RWPE1 (cell line): ENCODE measurements at regions of chrX and their contacts with region 1.

Region 1: GRCh38 chrX:119606280-119607015 is at the start of gene NKRF:
- DNase-seq: peak; percentile 77
- H3K27ac ChIP-seq: peak within 1 kb of the TSS; percentile 74
- CTCF ChIP-seq: no peak

Region 2: DNA sequence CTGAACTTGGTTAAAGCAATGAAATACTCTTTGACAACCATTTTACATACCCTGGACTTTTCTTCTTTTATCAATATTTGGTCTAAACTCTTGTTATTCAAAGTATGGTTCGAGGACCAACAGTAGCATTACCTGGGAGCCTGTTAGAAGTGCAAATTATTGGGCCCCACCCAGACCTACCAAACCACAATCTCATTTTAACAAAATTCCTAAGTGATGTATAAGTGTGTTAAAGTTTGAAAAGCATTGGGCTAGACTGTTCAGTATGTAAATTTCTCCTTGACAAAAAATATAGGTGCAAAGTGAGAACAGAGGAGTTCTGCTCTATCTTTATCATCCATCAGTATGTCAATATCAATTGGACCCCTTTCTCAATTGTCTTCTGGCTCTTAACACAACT is 303.3 kb before region 1 on chrX:
- CTCF ChIA-PET with region 1: no interaction called
- POLR2A ChIA-PET with region 1: no interaction called
- DNase-seq: no peak
- H3K27ac ChIP-seq: no peak overlapping the region
- CTCF ChIP-seq: no peak

Region 3: GRCh38 chrX:119729408-119730201 is 123.2 kb after region 1 on chrX:
- CTCF ChIA-PET with region 1: interaction called, 16 read pairs
- POLR2A ChIA-PET with region 1: no interaction called
- DNase-seq: peak; percentile 28
- H3K27ac ChIP-seq: no peak overlapping the region
- CTCF ChIP-seq: peak; percentile 60

Region 4: DNA sequence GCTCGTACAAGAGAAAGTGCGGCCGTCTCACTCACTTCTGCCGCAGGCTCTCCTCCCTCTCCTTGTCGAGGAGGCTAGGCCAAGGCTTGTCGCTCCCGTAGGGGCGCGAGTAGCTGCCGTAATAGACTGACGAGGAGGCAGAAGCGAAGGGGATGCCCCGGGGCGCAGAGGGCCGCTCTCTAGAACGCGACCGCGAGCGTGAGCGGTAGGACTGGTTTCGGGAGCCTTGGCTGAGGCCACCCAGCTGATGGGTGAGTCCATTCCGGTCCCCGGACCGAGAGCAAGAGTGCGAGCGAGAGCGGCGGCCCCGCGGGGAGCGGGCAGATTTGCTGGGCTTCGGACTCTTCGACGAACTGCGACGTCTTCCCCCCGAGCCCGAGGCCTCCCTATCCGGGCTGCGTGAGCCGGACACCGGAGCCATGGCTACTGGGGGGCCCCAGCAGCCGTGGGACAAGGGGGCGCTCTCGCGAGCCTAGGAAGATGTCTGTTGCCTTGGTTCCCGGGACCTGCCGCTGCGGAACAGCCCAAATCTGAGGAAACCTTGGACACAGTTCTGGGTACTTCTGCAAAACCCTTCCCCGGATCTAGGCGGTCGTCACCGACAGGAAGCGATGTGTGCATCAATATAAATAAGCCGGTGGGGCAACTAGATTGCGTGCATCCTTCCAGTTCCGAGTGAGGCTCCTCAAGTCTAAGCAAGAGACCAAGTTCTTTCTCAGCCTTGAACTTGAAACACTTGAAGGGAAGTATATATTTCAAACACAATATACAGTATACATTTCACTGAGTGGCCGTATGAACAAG is 336.9 kb after region 1 on chrX and contains the start of gene NKAP:
- CTCF ChIA-PET with region 1: no interaction called
- POLR2A ChIA-PET with region 1: no interaction called
- DNase-seq: peak; percentile 78
- H3K27ac ChIP-seq: peak within 1 kb of the TSS; percentile 93
- CTCF ChIP-seq: no peak

Region 5: GRCh38 chrX:120287513-120288112 is 681.2 kb after region 1 on chrX:
- CTCF ChIA-PET with region 1: no interaction called
- POLR2A ChIA-PET with region 1: no interaction called
- DNase-seq: no peak
- H3K27ac ChIP-seq: no peak overlapping the region
- CTCF ChIP-seq: no peak